Thyroid gland (tissue), 4 donors: ENCODE measurements at regions of chr12 and their contacts with region 1.

Region 1: DNA sequence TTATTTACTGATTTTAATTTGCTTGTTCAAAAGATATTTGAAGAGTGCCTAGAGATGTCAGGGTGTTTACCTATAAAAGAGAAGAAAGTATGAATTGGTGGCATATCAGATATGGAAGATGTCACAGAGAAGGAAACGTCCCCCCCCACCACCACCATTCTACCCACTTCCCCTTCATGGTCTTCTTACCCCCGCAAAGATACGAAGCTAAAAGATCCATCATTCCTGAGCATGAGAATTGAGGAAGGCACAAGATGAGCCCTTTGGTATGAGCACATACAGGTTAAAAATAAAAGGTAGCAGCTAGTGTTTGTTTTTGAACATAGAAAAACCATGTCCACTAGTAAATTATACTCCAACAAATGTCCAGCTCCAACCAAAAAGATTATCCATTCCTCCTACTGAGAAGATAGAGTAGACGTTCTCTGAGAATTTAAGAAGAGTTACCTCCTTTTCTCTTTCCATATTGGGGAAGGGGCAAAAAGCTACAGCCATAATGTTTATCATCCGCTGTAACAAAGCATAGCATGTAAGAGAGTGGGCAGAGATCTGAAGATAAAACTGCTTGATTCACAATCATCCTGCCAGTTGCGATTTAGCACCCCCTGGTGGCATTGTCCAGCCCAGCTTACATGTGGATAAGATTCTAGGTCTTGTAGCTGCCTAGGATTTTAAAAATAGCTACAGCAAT is 29.1 kb downstream of the NFYB start:
- DNase-seq: peak; percentile 90 to 93
- H3K4me3 ChIP-seq: no peak overlapping the region
- H3K27ac ChIP-seq: no peak overlapping the region
- H3K4me1 ChIP-seq: no peaks in the 10 kb centered on the region
- H3K27me3 ChIP-seq: no peaks in the 10 kb centered on the region
- CTCF ChIP-seq: peak; percentile 60 to 88 (median 76)
- POLR2A ChIP-seq: no peak

Region 2: DNA sequence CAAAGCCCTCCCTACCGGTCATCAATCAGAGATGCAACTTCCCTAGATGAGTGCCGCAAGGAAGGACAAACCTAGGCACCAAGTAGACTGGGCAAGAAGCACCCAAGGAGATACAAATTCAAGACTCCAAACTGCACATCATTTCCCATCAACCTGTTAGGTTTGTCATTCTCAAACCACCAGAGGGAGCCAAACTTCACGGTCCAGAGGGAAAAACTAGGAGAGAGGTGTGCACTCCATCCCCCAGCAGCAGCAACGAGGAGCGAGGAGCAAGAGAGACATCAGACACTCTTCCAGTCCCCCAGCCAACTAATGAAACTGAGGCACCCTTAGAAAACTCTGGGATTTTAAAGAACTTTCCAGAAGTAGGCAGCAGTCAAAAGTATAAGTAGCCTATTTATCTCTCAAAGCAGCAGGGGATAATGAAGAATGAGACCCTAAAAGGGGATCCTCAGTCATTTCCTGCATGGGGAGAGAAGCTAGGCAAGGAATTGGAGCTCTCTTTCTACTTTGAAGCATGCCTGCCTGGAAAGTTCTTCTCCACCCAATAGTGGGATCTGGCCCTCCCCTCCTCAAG is 230.9 kb before region 1 on chr12:
- intact Hi-C with region 1: loop called (anchors 10 kb)
- DNase-seq: peak; percentile 59 to 70
- H3K4me3 ChIP-seq: no peak overlapping the region
- H3K27ac ChIP-seq: no peak overlapping the region
- H3K4me1 ChIP-seq: peaks cover 3 to 4% of the 10 kb centered on the region in 2 donors
- H3K27me3 ChIP-seq: no peaks in the 10 kb centered on the region
- CTCF ChIP-seq: peak; percentile 42 to 75 (median 66)
- POLR2A ChIP-seq: no peak

Region 3: GRCh38 chr12:103947871-103948555 is 160.9 kb before region 1 on chr12:
- intact Hi-C with region 1: loop called (anchors 10 kb)
- DNase-seq: no peak
- H3K4me3 ChIP-seq: no peak overlapping the region
- H3K27ac ChIP-seq: no peak overlapping the region
- H3K4me1 ChIP-seq: no peaks in the 10 kb centered on the region
- H3K27me3 ChIP-seq: no peaks in the 10 kb centered on the region
- CTCF ChIP-seq: no peak
- POLR2A ChIP-seq: no peak